ENCODE measurements at regions of chr14 and their contacts with region 1.

Region 1: DNA sequence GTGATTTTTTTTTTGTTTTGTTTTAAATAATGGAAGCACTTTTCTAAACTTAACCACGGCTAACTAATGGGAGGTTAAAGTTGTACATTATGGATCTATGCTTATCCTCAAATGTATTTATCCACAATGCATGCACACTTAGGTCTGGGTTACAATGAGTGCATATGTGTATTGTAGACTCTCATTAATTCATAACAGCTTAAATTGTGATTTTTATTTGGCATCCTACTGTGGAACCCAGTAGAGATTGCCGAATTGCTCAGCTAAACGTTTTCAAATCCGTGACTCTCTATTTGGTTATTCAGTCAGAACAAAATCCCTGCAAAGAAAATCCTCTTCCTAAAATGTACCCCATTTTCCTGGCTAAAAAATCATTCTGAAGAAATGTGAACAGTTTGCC is 244.0 kb downstream of the SLC25A21 start:
- DNase-seq: no peak
- ATAC-seq: no peak

Region 2: GRCh38 chr14:36661756-36662498 is 266.5 kb before region 1 on chr14 and contains the start of gene PAX9:
- intact Hi-C with region 1: loop called (anchors 5 kb)
- DNase-seq: peak; percentile 80
- ATAC-seq: peak; percentile 92
- total RNA-seq, gene PAX9: not detected